GM13976 (cell line): ENCODE measurements at regions of chr11 and their contacts with region 1.

Region 1: DNA sequence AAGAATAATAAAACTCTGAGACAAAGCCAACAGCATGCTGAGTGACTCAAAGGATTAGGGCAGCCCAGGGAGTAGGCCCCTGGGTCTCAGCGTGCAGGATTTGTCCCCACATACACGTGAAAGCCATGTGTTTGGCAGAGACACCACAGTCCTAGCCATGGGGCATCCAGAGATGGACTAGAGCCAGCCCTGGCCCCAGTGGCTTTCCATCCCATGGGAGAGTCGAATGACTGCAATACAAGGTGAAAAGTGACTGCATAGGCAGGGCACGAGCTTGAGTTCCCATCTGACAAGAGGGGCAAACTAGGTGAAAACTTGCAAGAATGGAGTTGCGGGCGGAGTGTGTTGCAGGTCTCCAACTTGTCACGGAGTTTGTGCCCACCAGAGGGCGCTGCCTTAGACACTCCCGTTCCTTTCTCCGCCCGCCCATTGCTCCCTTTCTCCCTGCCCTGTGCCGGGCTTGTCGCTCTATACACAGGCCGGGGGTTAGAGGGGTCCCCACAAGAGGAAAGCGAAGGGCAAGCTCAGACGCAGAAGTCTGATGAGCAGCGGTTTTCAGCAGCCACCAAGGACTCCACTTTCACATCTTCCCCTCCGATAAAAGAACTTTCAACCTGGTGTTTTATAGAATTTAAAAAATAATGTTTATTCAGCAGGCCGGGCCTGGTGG is 24.2 kb downstream of the TSKU start:
- DNase-seq: peak; percentile 80
- CTCF ChIP-seq: peak; percentile 61

Region 2: GRCh38 chr11:76215941-76216340 is 591.4 kb before region 1 on chr11:
- in situ Hi-C with region 1: no loop called
- DNase-seq: no peak
- CTCF ChIP-seq: no peak

Region 3: DNA sequence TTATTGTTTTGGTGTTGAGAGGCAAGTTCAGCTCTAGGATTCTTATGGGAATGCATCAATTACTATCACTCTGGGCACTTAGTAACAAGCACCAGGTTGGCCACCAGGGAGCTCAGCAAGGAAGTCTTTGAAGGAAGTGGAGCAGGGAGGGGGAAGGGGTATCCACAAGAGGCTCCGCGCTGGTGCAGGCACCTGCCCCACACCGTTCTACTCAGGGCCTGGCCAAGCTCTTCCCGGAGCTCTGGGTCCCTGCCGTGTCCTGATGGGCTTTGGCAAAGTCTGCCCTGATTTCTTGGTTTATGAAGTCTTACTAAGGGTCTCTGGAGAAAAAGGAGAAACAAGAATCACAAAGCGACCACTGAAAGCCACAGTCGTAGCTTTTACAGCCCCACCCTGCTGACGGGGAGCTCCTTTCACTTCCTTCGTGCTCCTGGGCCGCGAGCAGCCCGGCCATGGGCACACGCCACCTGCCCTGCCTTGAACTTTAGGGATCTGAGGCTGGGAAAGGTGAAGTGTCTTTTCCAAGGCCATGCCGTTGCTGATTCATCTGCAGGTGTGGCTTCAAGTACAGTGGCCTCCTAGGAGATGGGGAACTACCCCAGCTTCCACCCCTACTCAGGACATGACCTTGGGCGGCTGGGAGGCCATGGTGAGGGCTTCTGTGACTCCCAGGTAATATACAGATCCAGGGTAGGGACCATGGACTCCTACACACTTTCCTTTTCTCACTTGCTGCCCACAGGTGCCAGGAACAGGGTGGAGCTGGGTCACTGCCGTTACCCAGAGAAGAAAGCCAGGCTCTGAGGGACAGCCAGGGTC is 120.9 kb before region 1 on chr11:
- in situ Hi-C with region 1: no loop called
- DNase-seq: peak; percentile 66
- CTCF ChIP-seq: no peak

Region 4: DNA sequence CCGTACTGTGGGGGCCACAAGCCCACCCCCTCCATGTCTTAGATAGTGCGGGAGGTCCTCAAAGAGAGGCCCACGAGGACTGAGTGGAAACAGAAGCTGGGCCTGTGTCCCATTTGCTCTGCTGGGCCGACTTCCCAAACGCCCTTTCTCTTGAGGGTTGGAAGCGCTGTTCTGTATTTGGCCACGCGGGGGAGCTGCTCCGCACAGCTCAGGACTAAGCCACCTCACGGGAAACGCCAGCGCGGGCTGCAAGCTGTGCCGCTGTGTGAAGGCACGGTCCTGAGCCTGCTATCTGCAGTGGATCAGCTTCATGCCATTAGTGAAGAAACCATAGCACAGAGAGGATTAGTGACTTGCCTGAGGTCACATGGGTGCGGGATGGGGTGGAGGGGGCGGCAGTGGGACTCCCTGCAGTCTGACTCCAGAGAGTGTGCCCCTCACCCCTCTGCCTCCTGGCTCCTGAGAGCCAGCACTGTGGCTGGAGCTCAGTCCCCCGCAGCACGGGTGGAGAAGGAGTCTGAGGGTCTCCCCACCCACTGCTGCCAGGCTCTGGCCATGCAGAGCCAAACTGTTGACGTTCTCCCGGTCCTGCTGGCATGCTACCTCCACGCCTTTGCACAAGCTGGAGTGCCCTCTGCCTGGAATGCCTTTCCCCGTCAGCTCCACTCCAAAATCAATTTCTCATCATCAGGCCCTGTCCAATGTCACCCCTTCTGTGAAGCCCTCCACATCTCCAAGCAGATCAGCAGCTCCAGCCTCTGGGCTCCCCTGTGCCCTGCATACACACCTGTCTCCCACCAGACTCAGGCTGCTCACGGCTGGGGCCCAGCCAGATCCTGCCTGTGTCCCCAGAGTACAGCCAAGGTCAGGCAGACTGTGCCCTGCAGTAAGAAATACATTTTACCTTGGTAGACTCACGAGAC is 85.3 kb before region 1 on chr11:
- in situ Hi-C with region 1: loop called (anchors 10 kb)
- DNase-seq: peak; percentile 82
- CTCF ChIP-seq: peak; percentile 93

Region 5: DNA sequence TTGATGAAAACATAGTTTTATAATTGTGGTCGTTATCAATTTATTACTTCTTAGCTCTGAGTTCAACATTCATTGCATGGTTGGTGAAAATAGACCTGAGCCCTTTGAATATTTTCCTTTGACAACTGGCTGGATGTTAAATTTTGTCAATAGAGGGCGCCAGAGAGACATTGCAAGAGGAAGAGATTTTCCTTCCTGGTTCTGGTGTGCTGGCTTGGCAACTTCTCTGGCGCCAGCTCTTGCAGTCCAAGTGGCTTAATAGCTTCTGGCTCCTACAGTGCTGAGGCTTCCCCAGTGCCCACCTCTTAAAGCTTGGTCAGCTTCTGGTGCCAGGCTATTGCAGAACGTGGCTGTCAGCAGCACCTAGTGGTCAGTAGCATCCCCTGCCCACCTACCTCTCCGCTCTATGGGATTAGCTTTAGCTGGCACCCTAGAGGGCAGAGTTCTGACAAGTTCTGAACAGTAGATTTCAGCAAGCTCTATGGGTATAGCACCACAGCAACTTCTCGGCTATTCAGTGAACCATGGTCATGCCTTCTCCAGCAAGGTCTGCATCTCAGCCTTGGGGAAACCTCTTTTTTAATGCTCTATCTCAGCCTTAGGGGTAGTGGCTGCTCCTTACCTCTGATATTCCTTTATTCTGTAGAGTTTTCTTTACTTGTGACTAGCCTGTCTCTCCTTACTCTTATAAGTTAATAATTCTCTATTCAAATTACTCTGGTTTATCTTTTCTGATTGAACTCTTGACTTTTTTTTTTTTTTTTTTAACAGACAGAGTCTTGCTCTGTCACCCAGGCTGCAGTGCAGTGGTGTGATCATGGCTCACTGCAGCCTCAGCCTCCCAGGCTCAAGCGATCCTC is 112.8 kb after region 1 on chr11:
- in situ Hi-C with region 1: loop called (anchors 10 kb)
- DNase-seq: peak; percentile 56
- CTCF ChIP-seq: peak; percentile 59

Region 6: GRCh38 chr11:77047007-77047927 is 239.9 kb after region 1 on chr11:
- in situ Hi-C with region 1: loop called (anchors 25 kb)
- DNase-seq: peak; percentile 79
- CTCF ChIP-seq: peak; percentile 53